ENCODE measurements at regions of chr14 and their contacts with region 1.

Region 1: DNA sequence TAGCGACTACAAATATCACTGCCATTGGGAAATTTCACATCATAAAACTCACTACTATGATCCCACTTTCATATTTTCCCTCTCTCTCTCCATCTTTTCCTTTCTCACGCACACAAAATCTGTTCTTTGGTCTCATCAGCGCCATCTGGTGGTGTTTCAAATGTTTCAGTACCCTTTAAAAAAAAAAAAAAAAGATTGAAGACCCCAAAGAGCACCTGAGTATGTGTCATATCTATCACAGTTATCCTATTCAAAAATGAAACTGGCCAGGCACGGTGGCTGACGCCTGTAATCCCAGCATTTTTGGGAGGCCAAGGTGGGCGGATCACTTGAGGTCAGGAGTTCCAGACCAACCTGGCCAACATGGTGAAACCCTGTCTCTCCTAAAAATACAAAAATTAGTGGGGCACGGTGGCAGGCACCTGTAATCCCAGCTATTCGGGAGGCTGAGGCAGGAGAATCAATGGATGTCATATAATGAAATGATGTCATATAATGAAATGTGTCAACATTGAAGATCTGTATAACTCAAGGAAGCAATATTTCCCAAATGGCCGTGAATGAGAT is 72.4 kb downstream of the TTC9 start:
- DNase-seq: peak; percentile 51 to 57
- H3K4me3 ChIP-seq: no peak overlapping the region
- H3K27ac ChIP-seq: peak overlapping the region; percentile 66 to 91 (median 83)
- H3K4me1 ChIP-seq: peaks cover 25 to 45% of the 10 kb centered on the region in 2 donors
- H3K27me3 ChIP-seq: no peaks in the 10 kb centered on the region
- CTCF ChIP-seq: peak; percentile 47 to 94 (median 67)
- POLR2A ChIP-seq: no peak

Region 2: GRCh38 chr14:70809543-70810244 is 95.6 kb after region 1 on chr14:
- intact Hi-C with region 1: loop called (anchors 10 kb)
- DNase-seq: peak; percentile 99
- H3K4me3 ChIP-seq: peak overlapping the region in 2 of 3 donors; percentile 16 to 84
- H3K27ac ChIP-seq: peak overlapping the region in 1 of 3 donors; percentile 10
- H3K4me1 ChIP-seq: peaks cover 12 to 14% of the 10 kb centered on the region in 2 donors
- H3K27me3 ChIP-seq: no peaks in the 10 kb centered on the region
- CTCF ChIP-seq: no peak
- POLR2A ChIP-seq: no peak

Region 3: GRCh38 chr14:71286135-71286534 is 572.0 kb after region 1 on chr14:
- intact Hi-C with region 1: no loop called
- DNase-seq: no peak
- H3K4me3 ChIP-seq: no peak overlapping the region
- H3K27ac ChIP-seq: no peak overlapping the region
- H3K4me1 ChIP-seq: peaks cover 0 to 4% of the 10 kb centered on the region in 2 donors
- H3K27me3 ChIP-seq: no peaks in the 10 kb centered on the region
- CTCF ChIP-seq: no peak
- POLR2A ChIP-seq: no peak